Activated CD8-positive, alpha-beta memory T cell treated with anti-CD3 and anti-CD28 coated beads, Interleukin-2, amount 10 ng/mL, durations not matched to agents 7 days and 5 days (primary cell): ENCODE measurements at regions of chr16 and their contacts with region 1.

Region 1: GRCh38 chr16:80824718-80825364 is 20.4 kb upstream of the CDYL2 start:
- DNase-seq: peak; percentile 63
- ATAC-seq: no peak
- H3K4me3 Mint-ChIP-seq: no peak overlapping the region
- H3K27ac Mint-ChIP-seq: no peak overlapping the region
- H3K4me1 Mint-ChIP-seq: peaks cover 2% of the 10 kb centered on the region
- H3K27me3 Mint-ChIP-seq: peaks cover 19% of the 10 kb centered on the region

Region 2: DNA sequence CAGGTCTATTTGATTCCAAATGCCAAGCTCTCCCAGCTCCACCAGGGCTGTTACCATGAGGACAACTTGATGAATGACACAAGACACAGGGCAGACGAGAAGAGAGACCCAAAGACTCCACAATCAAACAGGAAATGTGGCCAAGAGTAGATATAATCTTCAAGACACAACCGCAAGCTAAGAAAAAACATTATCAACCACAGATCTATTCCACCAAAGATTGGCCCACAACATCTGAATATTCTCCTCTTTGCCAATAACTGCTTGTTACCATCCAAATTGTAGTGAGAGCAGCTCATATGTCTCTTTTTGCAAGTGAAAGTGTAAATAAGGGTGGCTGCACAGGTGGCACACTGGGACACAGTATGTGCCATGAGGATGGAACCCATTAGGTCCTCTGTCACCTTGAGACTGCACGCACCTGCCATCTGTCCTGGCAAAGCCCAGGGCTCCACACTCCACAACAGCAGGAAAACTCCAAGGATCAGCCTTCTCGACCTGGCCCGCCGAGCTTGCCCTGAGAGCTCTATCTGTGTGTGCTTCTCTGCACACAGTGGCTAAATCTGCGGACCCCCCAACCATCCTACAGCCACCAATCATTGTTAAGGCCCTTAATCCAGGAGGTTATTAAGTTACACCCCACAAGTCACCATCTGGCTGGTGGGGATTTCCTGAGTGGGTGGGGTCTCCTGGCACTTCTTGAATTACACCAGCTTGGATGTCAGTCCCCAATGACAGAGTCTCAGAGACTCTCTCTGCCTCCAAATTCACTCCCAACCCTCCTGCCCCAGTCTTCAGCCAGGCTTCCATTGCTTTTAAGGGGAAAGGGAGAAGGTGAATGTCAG is 233.5 kb before region 1 on chr16:
- CTCF ChIA-PET with region 1: interaction called, 11 read pairs
- DNase-seq: peak; percentile 73
- ATAC-seq: peak; percentile 89
- H3K4me3 Mint-ChIP-seq: peak overlapping the region; percentile 26
- H3K27ac Mint-ChIP-seq: peak overlapping the region; percentile 76
- H3K4me1 Mint-ChIP-seq: peaks cover 45% of the 10 kb centered on the region
- H3K27me3 Mint-ChIP-seq: peaks cover 7% of the 10 kb centered on the region

Region 3: DNA sequence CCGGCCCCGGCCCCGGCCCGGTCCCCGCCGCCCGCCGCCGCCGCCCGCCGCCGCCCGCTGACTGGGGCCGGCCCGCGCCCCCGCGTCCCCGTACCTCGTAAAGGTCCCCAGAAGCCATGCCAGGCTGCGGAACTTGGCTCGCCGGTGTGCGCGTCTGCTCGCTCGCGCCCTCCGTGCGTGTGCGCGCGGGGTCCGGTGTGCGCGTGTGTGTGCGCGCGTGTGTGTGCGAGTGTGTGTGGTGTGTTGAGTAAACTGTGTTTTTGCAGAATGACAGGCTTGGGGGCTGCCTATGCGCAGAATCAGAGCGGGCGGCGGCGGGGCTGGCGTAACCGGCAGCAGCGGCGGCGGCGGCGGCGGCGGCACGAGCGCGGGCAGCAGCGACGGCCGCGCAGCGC is 20.8 kb before region 1 on chr16:
- CTCF ChIA-PET with region 1: interaction called, 10 read pairs
- DNase-seq: peak; percentile 69
- ATAC-seq: peak; percentile 35
- H3K4me3 Mint-ChIP-seq: peak overlapping the region; percentile 97
- H3K27ac Mint-ChIP-seq: peak overlapping the region; percentile 97
- H3K4me1 Mint-ChIP-seq: peaks cover 55% of the 10 kb centered on the region
- H3K27me3 Mint-ChIP-seq: no peaks in the 10 kb centered on the region

Region 4: GRCh38 chr16:80954985-80955384 is 130.1 kb after region 1 on chr16:
- CTCF ChIA-PET with region 1: no interaction called
- DNase-seq: no peak
- ATAC-seq: no peak
- H3K4me3 Mint-ChIP-seq: no peak overlapping the region
- H3K27ac Mint-ChIP-seq: no peak overlapping the region
- H3K4me1 Mint-ChIP-seq: no peaks in the 10 kb centered on the region
- H3K27me3 Mint-ChIP-seq: peaks cover 5% of the 10 kb centered on the region